A549 (cell line): ENCODE measurements at regions of chr12 and their contacts with region 1.

Region 1: DNA sequence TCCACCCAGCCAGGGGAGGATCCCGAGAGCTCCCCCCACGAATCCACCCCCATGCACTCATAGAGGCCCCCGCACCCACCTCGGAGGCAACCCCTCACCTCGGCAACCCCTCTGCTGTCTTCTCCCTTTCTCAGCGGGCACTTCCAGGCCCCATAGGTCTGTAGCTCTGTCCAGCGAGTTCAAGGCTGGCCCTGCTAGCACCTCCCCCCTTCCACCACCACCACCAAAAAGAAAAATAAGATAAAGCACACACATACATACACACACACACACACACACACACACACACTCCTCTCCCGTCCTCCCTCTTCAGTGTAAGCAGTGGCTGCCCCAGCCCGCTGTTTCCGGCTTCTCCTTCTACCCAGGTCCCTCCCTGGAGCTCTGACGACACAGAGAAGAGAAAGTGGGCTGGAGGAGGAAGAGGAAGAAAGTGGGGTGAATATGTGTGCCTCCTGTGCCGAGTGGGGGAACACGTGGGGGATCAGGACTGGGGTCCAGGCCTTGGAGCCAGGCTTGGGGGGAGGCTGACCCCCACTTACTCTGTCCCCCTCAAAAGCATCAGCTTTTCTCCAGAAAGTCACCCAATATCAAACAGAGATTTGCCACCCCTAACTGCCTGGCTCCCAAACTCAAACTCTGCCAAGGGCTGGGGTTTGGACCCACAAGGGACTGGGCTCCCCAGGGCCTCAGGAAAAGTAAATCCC is at the start of gene STAT6:
- DNase-seq: peak; percentile 67 to 87
- ATAC-seq: peak; percentile 71 to 78
- H3K4me3 ChIP-seq: peak within 1 kb of the TSS; percentile 59
- H3K27ac ChIP-seq: peak within 1 kb of the TSS; percentile 92 to 98
- H3K4me1 ChIP-seq: peaks cover 19% of the 10 kb centered on the region
- CTCF ChIP-seq: no peak; the same call in 2 of the 3 replicates
- EP300 ChIP-seq: no peak
- POLR2A ChIP-seq: peak; percentile 37
- RAD21 ChIP-seq: no peak
- polyA plus RNA-seq, gene STAT6: 58.8 and 64.6 TPM in 2 replicates

Region 2: DNA sequence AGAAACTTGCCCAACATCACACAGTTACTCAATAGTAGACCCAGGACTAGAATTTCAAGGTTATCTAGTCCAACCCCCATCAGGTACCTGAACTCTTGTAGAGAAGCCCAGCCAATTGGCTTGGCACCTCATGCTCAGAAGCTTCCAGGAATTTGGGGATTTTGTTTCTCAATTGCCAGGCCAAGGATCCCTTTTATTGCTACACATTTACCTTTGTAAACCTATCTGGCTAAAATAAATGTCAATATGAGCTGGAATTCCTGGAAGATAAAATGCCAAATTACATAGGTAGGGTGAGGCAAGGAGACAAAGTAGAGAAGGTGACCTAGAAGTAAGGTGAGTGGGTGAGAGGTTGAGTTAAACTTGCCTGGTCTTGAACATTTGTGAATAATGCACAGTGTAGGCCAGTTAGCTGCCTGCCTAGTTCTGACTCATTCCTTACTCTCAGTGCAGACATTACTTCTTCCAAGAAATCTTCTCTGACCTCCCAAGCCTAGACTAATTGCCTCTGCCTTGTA is 213.3 kb before region 1 on chr12:
- CTCF ChIA-PET with region 1: no interaction called
- POLR2A ChIA-PET with region 1: no interaction called
- DNase-seq: no peak
- ATAC-seq: peak in 1 of 2 experiments; percentile 45; a peak in 2 of 6 replicates
- H3K4me3 ChIP-seq: no peak overlapping the region
- H3K27ac ChIP-seq: no peak overlapping the region
- H3K4me1 ChIP-seq: peaks cover 20% of the 10 kb centered on the region
- CTCF ChIP-seq: no peak
- EP300 ChIP-seq: no peak
- POLR2A ChIP-seq: no peak
- RAD21 ChIP-seq: no peak

Region 3: GRCh38 chr12:56941299-56942017 is 169.7 kb before region 1 on chr12:
- CTCF ChIA-PET with region 1: no interaction called
- POLR2A ChIA-PET with region 1: no interaction called
- DNase-seq: peak; percentile 53 to 75
- ATAC-seq: peak; percentile 99
- H3K4me3 ChIP-seq: no peak overlapping the region
- H3K27ac ChIP-seq: peak overlapping the region; percentile 88 to 89
- H3K4me1 ChIP-seq: peaks cover 15% of the 10 kb centered on the region
- CTCF ChIP-seq: no peak
- EP300 ChIP-seq: no peak
- POLR2A ChIP-seq: no peak
- RAD21 ChIP-seq: no peak

Region 4: GRCh38 chr12:57046947-57047890 is 64.0 kb before region 1 on chr12:
- CTCF ChIA-PET with region 1: interaction called, 23 read pairs
- POLR2A ChIA-PET with region 1: no interaction called
- DNase-seq: no peak
- ATAC-seq: no peak
- H3K4me3 ChIP-seq: no peak overlapping the region
- H3K27ac ChIP-seq: no peak overlapping the region
- H3K4me1 ChIP-seq: peaks cover 23% of the 10 kb centered on the region; the same call in 2 of the 3 replicates
- CTCF ChIP-seq: no peak
- EP300 ChIP-seq: no peak
- POLR2A ChIP-seq: no peak
- RAD21 ChIP-seq: no peak

Region 5: DNA sequence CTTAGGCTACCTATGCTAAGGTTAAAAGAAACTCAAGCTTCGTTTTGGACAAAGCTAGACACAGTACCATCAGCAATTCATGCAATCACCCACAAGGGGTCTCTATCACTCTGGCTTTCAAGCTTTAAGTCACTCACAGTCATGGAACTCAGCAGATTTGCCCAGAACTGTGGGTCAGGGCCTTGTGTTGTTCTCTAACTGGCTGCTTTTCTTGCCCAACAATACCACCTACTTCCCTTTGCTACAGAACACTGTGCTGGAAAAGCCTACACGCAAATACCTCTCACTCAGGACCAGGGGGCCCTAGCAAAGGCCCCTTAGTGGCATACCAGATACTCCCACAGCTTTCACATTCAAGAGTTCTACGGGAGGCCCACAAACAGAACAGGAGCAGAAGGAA is 41.7 kb before region 1 on chr12:
- CTCF ChIA-PET with region 1: interaction called, 440 read pairs
- POLR2A ChIA-PET with region 1: interaction called, 66 read pairs
- DNase-seq: peak; percentile 48 to 86
- ATAC-seq: peak; percentile 99
- H3K4me3 ChIP-seq: no peak overlapping the region
- H3K27ac ChIP-seq: peak overlapping the region in 1 of 2 experiments; percentile 68; a peak in 3 of 6 replicates
- H3K4me1 ChIP-seq: 0 out of 3 replicates have a peak, but pooled peaks cover 4% of the 10 kb centered on the region
- CTCF ChIP-seq: peak; percentile 94
- EP300 ChIP-seq: no peak
- POLR2A ChIP-seq: no peak
- RAD21 ChIP-seq: peak; percentile 94 to 97

Region 6: DNA sequence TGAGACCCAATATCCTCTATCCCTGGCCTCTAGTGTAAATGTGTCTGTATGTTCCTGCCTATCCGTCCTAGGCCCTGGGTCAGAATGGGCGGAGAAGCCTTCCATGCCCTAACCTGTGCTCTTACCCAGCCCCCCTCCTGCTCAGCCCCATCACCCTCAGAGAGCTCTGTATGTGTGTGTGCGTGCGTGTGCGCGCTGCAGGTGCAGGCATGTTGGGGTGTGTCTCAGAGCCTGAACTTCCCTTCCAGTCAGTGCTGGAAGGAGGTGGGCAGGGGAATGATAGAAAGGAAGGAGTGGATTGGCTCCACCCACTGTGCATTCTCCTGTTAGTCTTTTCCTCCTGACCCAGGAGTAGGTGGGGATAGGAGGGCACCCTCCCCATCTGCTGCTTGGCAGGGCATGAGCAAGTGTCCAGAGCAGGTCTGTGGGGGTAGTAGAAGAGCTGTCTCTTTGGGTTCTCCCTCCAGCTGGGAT is 15.0 kb before region 1 on chr12:
- CTCF ChIA-PET with region 1: interaction called, 330 read pairs
- POLR2A ChIA-PET with region 1: interaction called, 143 read pairs
- DNase-seq: no peak
- ATAC-seq: peak in 1 of 2 experiments; percentile 14; a peak in 3 of 6 replicates
- H3K4me3 ChIP-seq: no peak overlapping the region
- H3K27ac ChIP-seq: no peak overlapping the region
- H3K4me1 ChIP-seq: 0 out of 3 replicates have a peak, but pooled peaks cover 4% of the 10 kb centered on the region
- CTCF ChIP-seq: no peak
- EP300 ChIP-seq: no peak
- POLR2A ChIP-seq: no peak
- RAD21 ChIP-seq: no peak

Region 7: GRCh38 chr12:57175428-57176138 is 64.4 kb after region 1 on chr12:
- CTCF ChIA-PET with region 1: interaction called, 1,152 read pairs
- POLR2A ChIA-PET with region 1: no interaction called
- DNase-seq: peak; percentile 79 to 88
- ATAC-seq: peak; percentile 67 to 90
- H3K4me3 ChIP-seq: no peak overlapping the region
- H3K27ac ChIP-seq: peak overlapping the region; percentile 28 to 64; a peak in 3 of 6 replicates
- H3K4me1 ChIP-seq: peaks cover 16% of the 10 kb centered on the region; the same call in 2 of the 3 replicates
- CTCF ChIP-seq: peak; percentile 83
- EP300 ChIP-seq: no peak
- POLR2A ChIP-seq: no peak
- RAD21 ChIP-seq: peak; percentile 72 to 75

Region 8: GRCh38 chr12:57213058-57213715 is 102.0 kb after region 1 on chr12:
- CTCF ChIA-PET with region 1: interaction called, 12 read pairs
- POLR2A ChIA-PET with region 1: no interaction called
- DNase-seq: peak; percentile 89 to 94
- ATAC-seq: peak; percentile 51 to 75
- H3K4me3 ChIP-seq: no peak overlapping the region
- H3K27ac ChIP-seq: peak overlapping the region in 1 of 2 experiments; percentile 67; a peak in 4 of 6 replicates
- H3K4me1 ChIP-seq: peaks cover 31% of the 10 kb centered on the region
- CTCF ChIP-seq: peak; percentile 90
- EP300 ChIP-seq: no peak
- POLR2A ChIP-seq: no peak
- RAD21 ChIP-seq: peak; percentile 78 to 85

Region 9: GRCh38 chr12:57765042-57765697 is 654.0 kb after region 1 on chr12:
- CTCF ChIA-PET with region 1: no interaction called
- POLR2A ChIA-PET with region 1: no interaction called
- DNase-seq: peak; percentile 70 to 74
- ATAC-seq: peak; percentile 72 to 83
- H3K4me3 ChIP-seq: peak overlapping the region; percentile 52
- H3K27ac ChIP-seq: peak overlapping the region; percentile 62 to 88; a peak in 5 of 6 replicates
- H3K4me1 ChIP-seq: peaks cover 25% of the 10 kb centered on the region
- CTCF ChIP-seq: peak; percentile 67
- EP300 ChIP-seq: no peak
- POLR2A ChIP-seq: peak; percentile 8; the same call in 1 of the 2 replicates
- RAD21 ChIP-seq: no peak